GM12878 (cell line): ENCODE measurements at regions of chr17 and their contacts with region 1.

Region 1: GRCh38 chr17:64420143-64420971 is 28.6 kb upstream of the MILR1 start:
- DNase-seq: no peak
- ATAC-seq: peak; percentile 91
- H3K4me3 ChIP-seq: no peak overlapping the region
- H3K27ac ChIP-seq: no peak overlapping the region
- H3K4me1 ChIP-seq: no peaks in the 10 kb centered on the region
- H3K27me3 ChIP-seq: no peaks in the 10 kb centered on the region
- CTCF ChIP-seq: peak; percentile 66 to 72 (median 69)
- EP300 ChIP-seq: no peak
- POLR2A ChIP-seq: no peak
- RAD21 ChIP-seq: peak; percentile 91

Region 2: GRCh38 chr17:64183815-64184214 is 236.5 kb before region 1 on chr17:
- CTCF ChIA-PET with region 1: no interaction called
- POLR2A ChIA-PET with region 1: no interaction called
- RAD21 ChIA-PET with region 1: no interaction called
- SMC1A ChIA-PET with region 1: no interaction called
- in situ Hi-C with region 1: no loop called
- intact Hi-C with region 1: no loop called
- DNase-seq: no peak
- ATAC-seq: no peak
- H3K4me3 ChIP-seq: no peak overlapping the region
- H3K27ac ChIP-seq: no peak overlapping the region
- H3K4me1 ChIP-seq: no peaks in the 10 kb centered on the region
- H3K27me3 ChIP-seq: no peaks in the 10 kb centered on the region
- CTCF ChIP-seq: no peak
- EP300 ChIP-seq: no peak
- POLR2A ChIP-seq: no peak
- RAD21 ChIP-seq: no peak

Region 3: GRCh38 chr17:64306850-64307463 is 113.4 kb before region 1 on chr17:
- CTCF ChIA-PET with region 1: interaction called, 627 read pairs
- POLR2A ChIA-PET with region 1: interaction called, 6 read pairs
- RAD21 ChIA-PET with region 1: interaction called, 23 read pairs
- SMC1A ChIA-PET with region 1: interaction called, 190 read pairs
- in situ Hi-C with region 1: no loop called
- intact Hi-C with region 1: loop called (anchors 1 kb)
- DNase-seq: no peak
- ATAC-seq: peak; percentile 83
- H3K4me3 ChIP-seq: no peak overlapping the region
- H3K27ac ChIP-seq: no peak overlapping the region
- H3K4me1 ChIP-seq: no peaks in the 10 kb centered on the region
- H3K27me3 ChIP-seq: no peaks in the 10 kb centered on the region
- CTCF ChIP-seq: peak; percentile 64 to 86 (median 84)
- EP300 ChIP-seq: no peak
- POLR2A ChIP-seq: no peak
- RAD21 ChIP-seq: peak; percentile 68

Region 4: GRCh38 chr17:64355536-64356303 is 64.6 kb before region 1 on chr17:
- CTCF ChIA-PET with region 1: interaction called, 6 read pairs
- POLR2A ChIA-PET with region 1: no interaction called
- RAD21 ChIA-PET with region 1: interaction called, 10 read pairs
- SMC1A ChIA-PET with region 1: interaction called, 6 read pairs
- in situ Hi-C with region 1: no loop called
- intact Hi-C with region 1: no loop called
- DNase-seq: no peak
- ATAC-seq: no peak
- H3K4me3 ChIP-seq: no peak overlapping the region
- H3K27ac ChIP-seq: no peak overlapping the region
- H3K4me1 ChIP-seq: no peaks in the 10 kb centered on the region
- H3K27me3 ChIP-seq: no peaks in the 10 kb centered on the region
- CTCF ChIP-seq: no peak
- EP300 ChIP-seq: no peak
- POLR2A ChIP-seq: no peak
- RAD21 ChIP-seq: no peak

Region 5: GRCh38 chr17:64431534-64431933 is 11.2 kb after region 1 on chr17:
- CTCF ChIA-PET with region 1: interaction called, 17 read pairs
- POLR2A ChIA-PET with region 1: no interaction called
- RAD21 ChIA-PET with region 1: interaction called, 6 read pairs
- SMC1A ChIA-PET with region 1: interaction called, 30 read pairs
- in situ Hi-C with region 1: no loop called
- intact Hi-C with region 1: no loop called
- DNase-seq: no peak
- ATAC-seq: no peak
- H3K4me3 ChIP-seq: no peak overlapping the region
- H3K27ac ChIP-seq: no peak overlapping the region
- H3K4me1 ChIP-seq: no peaks in the 10 kb centered on the region
- H3K27me3 ChIP-seq: no peaks in the 10 kb centered on the region
- CTCF ChIP-seq: no peak
- EP300 ChIP-seq: no peak
- POLR2A ChIP-seq: no peak
- RAD21 ChIP-seq: no peak

Region 6: GRCh38 chr17:64496786-64497564 is 76.6 kb after region 1 on chr17 and contains the start of gene POLG2:
- CTCF ChIA-PET with region 1: interaction called, 350 read pairs
- POLR2A ChIA-PET with region 1: interaction called, 9 read pairs
- RAD21 ChIA-PET with region 1: interaction called, 174 read pairs
- SMC1A ChIA-PET with region 1: interaction called, 121 read pairs
- in situ Hi-C with region 1: loop called (anchors 5 kb)
- intact Hi-C with region 1: no loop called
- DNase-seq: peak; percentile 75
- ATAC-seq: peak; percentile 88
- H3K4me3 ChIP-seq: peak within 1 kb of the TSS; percentile 88
- H3K27ac ChIP-seq: peak within 1 kb of the TSS; percentile 85
- H3K4me1 ChIP-seq: peaks cover 11% of the 10 kb centered on the region; the same call in 1 of the 2 replicates
- H3K27me3 ChIP-seq: no peaks in the 10 kb centered on the region
- CTCF ChIP-seq: peak; percentile 63 to 71 (median 66)
- EP300 ChIP-seq: no peak; a peak in 1 of 4 replicates
- POLR2A ChIP-seq: peak; percentile 95
- RAD21 ChIP-seq: peak; percentile 36; the same call in 1 of the 2 replicates
- polyA plus RNA-seq, gene POLG2: 10.2 to 13.5 TPM

Region 7: GRCh38 chr17:64573214-64573613 is 152.9 kb after region 1 on chr17:
- CTCF ChIA-PET with region 1: interaction called, 11 read pairs
- POLR2A ChIA-PET with region 1: no interaction called
- RAD21 ChIA-PET with region 1: interaction called, 3 read pairs
- SMC1A ChIA-PET with region 1: interaction called, 8 read pairs
- in situ Hi-C with region 1: no loop called
- intact Hi-C with region 1: no loop called
- DNase-seq: no peak
- ATAC-seq: peak; percentile 27; the same call in 1 of the 3 replicates
- H3K4me3 ChIP-seq: no peak overlapping the region
- H3K27ac ChIP-seq: no peak overlapping the region
- H3K4me1 ChIP-seq: no peaks in the 10 kb centered on the region
- H3K27me3 ChIP-seq: no peaks in the 10 kb centered on the region
- CTCF ChIP-seq: no peak
- EP300 ChIP-seq: no peak
- POLR2A ChIP-seq: no peak
- RAD21 ChIP-seq: no peak